ENCODE measurements at regions of chr17 and their contacts with region 1.

Region 1: GRCh38 chr17:66255112-66255511 is 25.9 kb upstream of the APOH start:
- DNase-seq: peak; percentile 82
- H3K4me3 Mint-ChIP-seq: no peak overlapping the region
- H3K27ac Mint-ChIP-seq: no peak overlapping the region
- H3K4me1 Mint-ChIP-seq: no peaks in the 10 kb centered on the region
- H3K27me3 Mint-ChIP-seq: no peaks in the 10 kb centered on the region
- CTCF ChIP-seq: peak; percentile 72

Region 2: GRCh38 chr17:66200685-66201092 is 54.4 kb before region 1 on chr17:
- CTCF ChIA-PET with region 1: interaction called, 5 read pairs
- POLR2A ChIA-PET with region 1: no interaction called
- intact Hi-C with region 1: loop called (anchors 1 kb)
- DNase-seq: peak; percentile 79
- H3K4me3 Mint-ChIP-seq: no peak overlapping the region
- H3K27ac Mint-ChIP-seq: no peak overlapping the region
- H3K4me1 Mint-ChIP-seq: peaks cover 6% of the 10 kb centered on the region
- H3K27me3 Mint-ChIP-seq: no peaks in the 10 kb centered on the region
- CTCF ChIP-seq: peak; percentile 64

Region 3: DNA sequence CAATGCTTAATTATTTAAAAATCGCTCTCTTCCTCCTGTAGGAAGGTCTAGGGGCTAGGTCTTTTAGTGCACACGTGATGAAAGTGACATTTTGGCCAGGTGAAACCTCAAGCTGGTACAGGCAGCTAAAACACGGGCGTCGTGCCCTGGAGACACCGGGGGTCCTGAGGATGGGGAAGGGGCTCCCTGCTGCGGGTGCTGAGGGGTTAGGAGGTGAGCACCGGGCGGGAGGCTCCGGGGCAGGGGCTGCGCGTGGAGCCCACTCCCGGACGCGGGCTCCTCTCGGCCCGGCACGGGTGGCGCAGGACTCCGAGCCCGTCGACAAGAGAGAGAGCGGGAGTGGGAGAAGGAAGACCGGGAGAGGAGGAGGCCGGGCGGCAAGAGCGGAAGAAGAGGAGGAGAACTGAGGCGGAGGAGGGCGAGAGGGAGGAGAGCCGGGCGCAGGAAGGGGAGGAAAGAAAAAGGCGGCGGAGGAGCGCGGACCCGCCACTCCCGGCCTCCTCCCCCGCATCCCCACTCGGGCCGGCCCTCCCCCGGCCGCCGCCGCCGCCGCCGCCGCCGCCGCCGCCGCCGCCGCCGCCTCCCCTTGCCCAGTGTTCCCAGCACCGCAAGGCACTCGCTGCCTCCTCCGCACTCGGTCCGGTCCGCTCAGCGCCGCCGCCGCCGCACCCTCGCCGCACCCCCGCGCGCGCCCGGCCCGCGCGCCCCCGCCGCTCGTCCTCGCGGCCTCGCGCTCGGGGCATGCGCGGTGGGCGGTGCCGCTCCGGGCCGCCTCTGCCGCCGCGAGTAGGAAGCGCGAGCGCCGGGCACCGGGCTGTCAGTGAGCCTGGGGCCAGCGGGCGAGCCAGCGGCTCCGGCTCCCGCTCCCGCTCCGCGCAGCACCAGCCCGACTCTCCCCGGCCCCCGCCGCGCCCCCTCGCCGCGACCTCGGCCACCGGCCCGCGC is 47.0 kb after region 1 on chr17 and contains the start of gene PRKCA:
- CTCF ChIA-PET with region 1: no interaction called
- POLR2A ChIA-PET with region 1: no interaction called
- intact Hi-C with region 1: loop called (anchors 1 kb)
- DNase-seq: peak; percentile 63
- H3K4me3 Mint-ChIP-seq: peak within 1 kb of the TSS; percentile 96
- H3K27ac Mint-ChIP-seq: peak within 1 kb of the TSS; percentile 97
- H3K4me1 Mint-ChIP-seq: peaks cover 35% of the 10 kb centered on the region
- H3K27me3 Mint-ChIP-seq: no peaks in the 10 kb centered on the region
- CTCF ChIP-seq: no peak
- total RNA-seq, gene PRKCA: 20.7 and 22.8 TPM in 2 replicates

Region 4: GRCh38 chr17:66426397-66427033 is 171.4 kb after region 1 on chr17:
- CTCF ChIA-PET with region 1: interaction called, 3 read pairs
- POLR2A ChIA-PET with region 1: no interaction called
- intact Hi-C with region 1: loop called (anchors 1 kb)
- DNase-seq: peak; percentile 30
- H3K4me3 Mint-ChIP-seq: no peak overlapping the region
- H3K27ac Mint-ChIP-seq: no peak overlapping the region
- H3K4me1 Mint-ChIP-seq: peaks cover 9% of the 10 kb centered on the region
- H3K27me3 Mint-ChIP-seq: no peaks in the 10 kb centered on the region
- CTCF ChIP-seq: no peak

Region 5: GRCh38 chr17:66437476-66438026 is 182.4 kb after region 1 on chr17:
- CTCF ChIA-PET with region 1: no interaction called
- POLR2A ChIA-PET with region 1: no interaction called
- intact Hi-C with region 1: no loop called
- DNase-seq: no peak
- H3K4me3 Mint-ChIP-seq: no peak overlapping the region
- H3K27ac Mint-ChIP-seq: no peak overlapping the region
- H3K4me1 Mint-ChIP-seq: peaks cover 15% of the 10 kb centered on the region
- H3K27me3 Mint-ChIP-seq: no peaks in the 10 kb centered on the region
- CTCF ChIP-seq: no peak

Region 6: DNA sequence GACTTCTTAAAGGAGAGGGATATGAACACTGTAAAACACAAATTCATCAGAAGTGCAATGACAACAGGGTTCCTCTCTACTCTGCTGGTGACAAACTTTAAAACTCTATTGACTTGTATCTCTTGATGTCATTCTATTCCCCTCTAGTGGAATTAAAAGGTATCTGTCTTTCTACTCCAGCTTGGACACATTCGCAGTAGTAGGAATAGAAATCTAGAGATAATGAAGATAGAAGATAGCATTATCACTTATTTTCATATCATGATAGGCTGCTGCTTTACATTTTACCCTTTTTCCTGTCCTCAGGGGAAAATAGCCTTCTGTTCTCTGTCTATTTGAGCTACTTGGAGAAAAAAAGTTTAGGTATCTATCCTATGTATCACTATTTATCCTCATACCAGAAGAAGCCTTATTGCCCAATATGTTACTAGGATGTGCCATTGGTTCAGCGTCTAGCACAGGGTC is 370.2 kb after region 1 on chr17:
- CTCF ChIA-PET with region 1: interaction called, 19 read pairs
- POLR2A ChIA-PET with region 1: interaction called, 3 read pairs
- intact Hi-C with region 1: loop called (anchors 1 kb)
- DNase-seq: peak; percentile 33
- H3K4me3 Mint-ChIP-seq: no peak overlapping the region
- H3K27ac Mint-ChIP-seq: no peak overlapping the region
- H3K4me1 Mint-ChIP-seq: no peaks in the 10 kb centered on the region
- H3K27me3 Mint-ChIP-seq: no peaks in the 10 kb centered on the region
- CTCF ChIP-seq: peak; percentile 51

Measured in MCF 10A (cell line).